ENCODE measurements at regions of chr1 and their contacts with region 1.

Region 1: DNA sequence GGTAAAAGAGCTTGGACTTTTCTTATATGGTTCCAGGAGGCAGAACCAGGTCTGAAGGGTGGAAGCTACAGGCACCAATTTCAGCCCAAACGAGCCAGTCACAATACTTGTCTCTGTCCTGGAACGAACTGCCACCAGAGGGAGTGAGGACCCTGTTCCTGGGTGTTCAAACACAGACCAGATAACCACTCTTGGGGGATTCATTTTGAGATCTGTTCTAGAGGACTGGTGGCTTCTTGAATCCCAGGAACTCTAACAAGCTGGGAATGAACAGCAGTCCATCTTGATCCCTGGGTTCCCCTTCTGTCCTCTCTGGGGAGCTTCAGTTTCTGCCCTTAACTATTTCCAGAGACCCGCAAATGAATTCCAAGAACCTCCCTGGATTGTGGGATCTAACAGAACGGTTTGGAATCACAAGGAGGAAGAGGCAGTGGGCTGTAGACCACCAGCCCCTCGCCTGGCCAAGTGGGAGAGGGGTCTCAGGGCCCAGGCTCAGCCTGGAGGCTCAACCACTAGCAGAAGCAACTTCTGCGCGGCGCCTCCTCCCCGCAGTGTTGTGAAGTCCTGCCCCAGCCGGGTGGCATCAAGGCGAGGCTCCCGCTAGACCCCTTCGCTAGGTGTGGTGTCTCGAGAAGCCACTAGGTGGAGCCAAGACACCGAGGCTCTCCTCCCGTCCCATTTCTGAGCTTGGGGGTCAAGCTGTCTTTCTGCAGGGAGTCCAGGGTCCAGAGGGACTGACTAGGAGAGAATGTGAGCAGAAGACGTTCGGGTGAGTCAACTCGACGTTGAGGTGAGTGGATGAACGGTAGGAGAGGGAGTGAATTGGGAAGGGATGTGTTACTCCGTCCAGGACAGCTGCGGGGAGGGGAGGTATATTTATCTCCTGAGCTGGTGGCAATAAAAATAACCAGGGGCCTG is 12.1 kb upstream of the NES start:
- DNase-seq: peak; percentile 86
- H3K4me3 ChIP-seq: no peak overlapping the region
- H3K27ac ChIP-seq: no peak overlapping the region
- H3K4me1 ChIP-seq: no peaks in the 10 kb centered on the region
- H3K27me3 ChIP-seq: peaks cover 19 to 31% of the 10 kb centered on the region in 2 experiments
- CTCF ChIP-seq: peak; percentile 87 to 93
- POLR2A ChIP-seq: no peak

Region 2: GRCh38 chr1:156618853-156619581 is 70.3 kb before region 1 on chr1 and contains the start of gene HAPLN2:
- CTCF ChIA-PET with region 1: interaction called, 29 read pairs
- POLR2A ChIA-PET with region 1: no interaction called
- dilution Hi-C with region 1: no loop called
- intact Hi-C with region 1: no loop called
- DNase-seq: peak; percentile 20
- H3K4me3 ChIP-seq: no peak within 1 kb of the TSS
- H3K27ac ChIP-seq: no peak within 1 kb of the TSS
- H3K4me1 ChIP-seq: peaks cover 8% of the 10 kb centered on the region
- H3K27me3 ChIP-seq: peaks cover 32 to 43% of the 10 kb centered on the region in 2 experiments
- CTCF ChIP-seq: peak; percentile 23 to 56
- POLR2A ChIP-seq: no peak
- total RNA-seq, gene HAPLN2: not detected in 2 replicates

Region 3: DNA sequence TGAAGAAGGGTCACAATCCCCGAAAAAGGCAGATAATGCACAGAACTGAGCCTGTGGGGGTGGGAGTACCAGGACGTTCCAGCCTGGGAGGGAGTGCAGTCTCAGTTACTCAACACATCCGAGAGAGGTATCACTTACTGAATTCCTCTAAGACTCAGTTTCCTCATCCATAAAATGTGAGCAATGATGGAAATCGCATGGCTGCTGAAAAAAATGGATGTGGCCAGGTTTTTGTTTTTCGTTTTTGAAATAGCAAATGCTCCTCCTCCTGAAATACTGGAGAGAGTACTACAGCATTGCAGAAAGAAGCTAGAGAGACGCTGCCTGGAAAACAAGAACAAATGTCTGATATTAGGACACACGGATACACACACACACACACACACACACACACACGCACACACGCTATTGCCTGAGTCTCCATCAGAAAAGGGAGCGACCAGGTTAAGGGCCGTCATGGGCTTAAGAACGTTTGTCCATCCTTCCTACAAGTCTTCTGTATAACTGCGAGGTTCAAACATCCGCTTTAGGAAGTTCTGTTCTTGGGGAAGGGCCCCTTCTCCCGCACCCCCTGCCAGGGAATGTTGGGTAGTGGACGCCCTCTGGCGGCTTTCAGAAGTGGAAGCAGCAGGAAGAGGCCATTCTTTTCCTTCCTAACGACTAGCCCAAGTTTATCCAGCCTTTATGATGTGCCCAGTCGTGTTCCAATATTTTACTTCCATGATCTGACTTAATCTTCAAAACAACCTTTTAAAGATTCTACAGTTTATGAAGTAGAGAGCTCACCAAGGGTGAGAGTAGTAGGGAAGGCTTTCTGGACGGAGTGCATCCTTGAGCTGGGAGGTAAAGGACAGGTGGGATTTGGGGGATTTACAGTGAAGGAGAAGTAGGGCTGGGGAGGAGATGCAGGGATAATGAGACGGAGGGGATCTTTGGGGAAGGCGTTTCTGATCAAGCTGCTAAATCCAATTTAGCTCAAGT is 11.4 kb before region 1 on chr1:
- CTCF ChIA-PET with region 1: interaction called, 73 read pairs
- POLR2A ChIA-PET with region 1: no interaction called
- dilution Hi-C with region 1: no loop called
- intact Hi-C with region 1: no loop called
- DNase-seq: peak; percentile 83
- H3K4me3 ChIP-seq: peak overlapping the region; percentile 19 to 81 (median 50)
- H3K27ac ChIP-seq: peak overlapping the region; percentile 19
- H3K4me1 ChIP-seq: peaks cover 36% of the 10 kb centered on the region
- H3K27me3 ChIP-seq: peaks cover 2 to 5% of the 10 kb centered on the region in 2 experiments
- CTCF ChIP-seq: peak; percentile 91
- POLR2A ChIP-seq: no peak

Region 4: GRCh38 chr1:156740679-156741612 is 51.7 kb after region 1 on chr1 and contains the start of gene MRPL24:
- CTCF ChIA-PET with region 1: interaction called, 14 read pairs
- POLR2A ChIA-PET with region 1: no interaction called
- dilution Hi-C with region 1: no loop called
- intact Hi-C with region 1: no loop called
- DNase-seq: peak; percentile 99
- H3K4me3 ChIP-seq: peak within 1 kb of the TSS; percentile 59 to 67 (median 61)
- H3K27ac ChIP-seq: peak within 1 kb of the TSS; percentile 22
- H3K4me1 ChIP-seq: peaks cover 14% of the 10 kb centered on the region
- H3K27me3 ChIP-seq: no peaks in the 10 kb centered on the region
- CTCF ChIP-seq: no peak
- POLR2A ChIP-seq: peak; percentile 69
- total RNA-seq, gene MRPL24: 63.3 and 77.7 TPM in 2 replicates

Region 5: GRCh38 chr1:156781585-156782186 is 92.4 kb after region 1 on chr1:
- CTCF ChIA-PET with region 1: interaction called, 13 read pairs
- POLR2A ChIA-PET with region 1: no interaction called
- dilution Hi-C with region 1: no loop called
- intact Hi-C with region 1: no loop called
- DNase-seq: no peak
- H3K4me3 ChIP-seq: no peak overlapping the region
- H3K27ac ChIP-seq: no peak overlapping the region
- H3K4me1 ChIP-seq: peaks cover 11% of the 10 kb centered on the region
- H3K27me3 ChIP-seq: no peaks in the 10 kb centered on the region
- CTCF ChIP-seq: no peak
- POLR2A ChIP-seq: no peak

Region 6: GRCh38 chr1:156869455-156869854 is 180.2 kb after region 1 on chr1:
- CTCF ChIA-PET with region 1: interaction called, 184 read pairs
- POLR2A ChIA-PET with region 1: no interaction called
- dilution Hi-C with region 1: no loop called
- intact Hi-C with region 1: no loop called
- DNase-seq: no peak
- H3K4me3 ChIP-seq: no peak overlapping the region
- H3K27ac ChIP-seq: no peak overlapping the region
- H3K4me1 ChIP-seq: peaks cover 10% of the 10 kb centered on the region
- H3K27me3 ChIP-seq: no peaks in the 10 kb centered on the region
- CTCF ChIP-seq: no peak
- POLR2A ChIP-seq: no peak

Region 7: DNA sequence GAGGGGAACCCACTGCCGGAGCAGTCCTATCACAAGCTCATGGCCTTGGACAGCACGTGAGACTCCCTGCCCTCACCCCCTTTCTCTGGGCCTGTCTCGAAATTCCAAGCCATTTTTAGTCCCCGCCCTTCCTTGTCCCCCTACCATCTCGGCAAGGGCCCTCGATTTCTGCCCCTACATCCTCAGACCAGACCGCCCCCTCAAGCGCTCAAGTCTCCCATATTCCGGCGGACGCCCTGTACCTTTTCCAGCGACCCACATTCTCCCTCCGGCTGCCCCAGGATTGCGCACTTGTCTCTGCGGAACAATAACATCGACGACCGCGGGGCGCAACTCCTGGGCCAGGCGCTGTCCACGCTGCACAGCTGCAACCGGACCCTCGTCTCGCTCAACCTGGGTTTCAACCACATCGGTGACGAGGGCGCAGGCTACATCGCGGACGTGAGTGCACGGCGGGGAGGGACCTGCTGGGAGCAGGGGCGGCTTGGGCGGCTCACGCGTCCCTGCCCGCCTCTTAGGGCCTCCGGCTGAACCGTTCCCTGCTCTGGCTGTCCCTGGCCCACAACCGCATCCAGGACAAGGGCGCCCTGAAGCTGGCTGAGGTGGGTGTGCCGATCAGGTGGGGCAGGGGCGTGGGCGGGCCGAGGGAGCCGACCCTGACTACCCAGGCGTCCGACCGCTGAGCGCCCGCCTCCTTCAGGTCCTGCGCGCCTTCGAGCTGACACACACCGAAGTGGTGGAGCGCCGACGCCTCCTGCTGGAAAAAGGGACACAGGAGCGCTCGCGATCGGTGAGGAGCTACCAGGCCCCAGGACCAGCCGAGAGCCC is 238.1 kb after region 1 on chr1:
- CTCF ChIA-PET with region 1: interaction called, 72 read pairs
- POLR2A ChIA-PET with region 1: no interaction called
- dilution Hi-C with region 1: no loop called
- intact Hi-C with region 1: loop called (anchors 1 kb)
- DNase-seq: peak; percentile 79
- H3K4me3 ChIP-seq: peak overlapping the region in 1 of 3 experiments; percentile 17
- H3K27ac ChIP-seq: no peak overlapping the region
- H3K4me1 ChIP-seq: peaks cover 2% of the 10 kb centered on the region
- H3K27me3 ChIP-seq: peaks cover 17 to 25% of the 10 kb centered on the region in 2 experiments
- CTCF ChIP-seq: peak; percentile 82 to 93
- POLR2A ChIP-seq: no peak

Region 8: DNA sequence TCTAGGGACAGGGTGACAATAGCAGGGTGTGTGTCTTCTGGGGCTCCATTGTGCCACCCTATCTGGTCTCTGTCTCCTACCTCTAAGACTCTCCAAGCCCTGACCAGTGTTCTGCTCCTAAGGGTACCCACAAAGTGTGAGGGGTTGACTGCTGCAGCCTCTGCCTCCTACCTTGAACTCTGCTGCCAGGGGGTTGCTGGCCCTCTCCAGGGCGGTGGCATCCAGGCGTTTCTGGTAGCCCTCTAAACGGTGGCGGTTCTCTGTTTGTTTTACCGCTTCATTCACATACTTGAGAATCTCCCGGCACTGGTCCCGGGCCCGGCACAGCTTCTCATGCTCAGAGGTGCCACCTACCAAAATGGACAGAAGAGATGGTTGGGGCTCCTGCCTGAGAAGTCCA is 255.6 kb after region 1 on chr1:
- CTCF ChIA-PET with region 1: no interaction called
- POLR2A ChIA-PET with region 1: no interaction called
- dilution Hi-C with region 1: no loop called
- intact Hi-C with region 1: no loop called
- DNase-seq: no peak
- H3K4me3 ChIP-seq: no peak overlapping the region
- H3K27ac ChIP-seq: no peak overlapping the region
- H3K4me1 ChIP-seq: no peaks in the 10 kb centered on the region
- H3K27me3 ChIP-seq: no peaks in the 10 kb centered on the region
- CTCF ChIP-seq: no peak
- POLR2A ChIP-seq: no peak

Measured in endothelial cell of umbilical vein (primary cell).